Heart left ventricle (tissue), 16 donors: ENCODE measurements at regions of chr17 and their contacts with region 1.

Region 1: DNA sequence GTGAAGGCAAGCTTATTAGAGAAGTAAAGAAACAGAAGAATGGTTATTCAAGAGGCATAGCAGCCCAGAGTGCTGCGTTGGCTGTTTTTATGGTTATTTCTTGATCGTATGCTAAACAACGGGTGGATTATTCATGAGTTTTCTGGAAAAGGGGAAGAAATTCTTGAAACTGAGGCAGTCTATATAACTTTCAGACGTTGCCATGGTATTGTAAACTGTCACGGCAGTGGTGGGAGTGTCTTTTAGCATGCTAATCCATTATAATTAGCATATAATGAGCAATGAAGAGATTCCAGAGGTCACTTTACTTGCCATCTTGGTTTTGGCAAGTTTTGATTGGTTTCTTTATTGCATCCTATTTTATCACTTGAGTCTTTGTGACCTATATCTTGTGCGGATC is 17.4 kb upstream of the MILR1 start:
- DNase-seq: no peak
- ATAC-seq: no peak
- H3K4me3 ChIP-seq: peak overlapping the region in 1 of 12 donors; percentile 18
- H3K27ac ChIP-seq: no peak overlapping the region
- H3K4me1 ChIP-seq: no peaks in the 10 kb centered on the region
- H3K27me3 ChIP-seq: peaks cover 0 to 8% (median 0%) of the 10 kb centered on the region in 9 donors
- CTCF ChIP-seq: no peak
- POLR2A ChIP-seq: no peak

Region 2: GRCh38 chr17:64470625-64471024 is 39.1 kb after region 1 on chr17:
- intact Hi-C with region 1: loop called in 2 of 10 experiments (anchors 5 kb)
- DNase-seq: no peak
- ATAC-seq: no peak
- H3K4me3 ChIP-seq: no peak overlapping the region
- H3K27ac ChIP-seq: no peak overlapping the region
- H3K4me1 ChIP-seq: no peaks in the 10 kb centered on the region
- H3K27me3 ChIP-seq: no peaks in the 10 kb centered on the region
- CTCF ChIP-seq: no peak
- POLR2A ChIP-seq: no peak